Endothelial cell of umbilical vein (primary cell): ENCODE measurements at regions of chr2 and their contacts with region 1.

Region 1: DNA sequence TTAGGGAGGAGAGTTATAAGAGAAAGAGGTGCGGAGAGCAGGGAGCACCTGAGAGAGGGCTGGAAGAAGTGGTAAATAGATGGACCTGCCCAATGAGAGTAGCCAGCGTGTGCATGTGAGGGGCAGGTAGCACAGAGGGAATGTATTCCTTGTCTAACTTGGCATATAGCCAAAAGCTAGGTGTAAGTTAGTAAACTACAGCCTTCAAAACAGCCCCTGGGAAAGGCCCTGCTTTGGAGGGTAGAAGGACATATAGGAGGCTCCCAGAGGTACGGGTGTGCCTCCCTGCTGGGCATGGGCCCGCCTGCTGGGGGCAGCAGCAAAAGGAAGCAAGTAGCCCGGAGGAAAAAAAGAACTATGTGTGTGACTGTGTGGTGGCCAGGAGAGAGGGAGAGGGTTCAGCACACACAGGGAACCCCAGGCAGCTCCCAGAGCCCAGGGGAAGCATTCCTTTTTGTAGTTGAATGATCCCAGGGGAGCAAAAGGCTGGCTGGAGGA is 48.0 kb downstream of the TCF7L1 start:
- DNase-seq: no peak
- H3K4me3 ChIP-seq: no peak overlapping the region
- H3K27ac ChIP-seq: no peak overlapping the region
- H3K4me1 ChIP-seq: peaks cover 42% of the 10 kb centered on the region
- H3K27me3 ChIP-seq: no peaks in the 10 kb centered on the region
- CTCF ChIP-seq: no peak
- POLR2A ChIP-seq: no peak

Region 2: DNA sequence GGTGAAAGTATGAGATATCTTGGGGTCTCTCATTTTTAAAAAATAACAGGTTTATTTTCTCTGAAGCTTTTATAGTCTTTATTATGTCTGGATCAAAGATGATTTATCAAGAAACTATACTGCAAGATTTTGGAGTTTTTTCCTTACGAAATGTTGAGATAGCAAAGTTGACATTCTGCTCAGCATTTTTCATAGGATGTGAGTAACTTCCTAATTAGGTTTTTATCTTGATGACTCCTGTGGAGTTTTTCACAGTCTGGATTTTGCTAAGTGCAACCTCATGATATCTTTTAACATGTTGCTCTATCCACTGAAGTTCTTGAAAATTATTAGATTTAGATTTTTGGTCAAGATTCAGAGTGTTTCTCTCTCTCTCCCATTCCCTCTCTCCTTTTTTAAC is 30.2 kb before region 1 on chr2:
- CTCF ChIA-PET with region 1: interaction called, 12 read pairs
- POLR2A ChIA-PET with region 1: no interaction called
- dilution Hi-C with region 1: no loop called
- intact Hi-C with region 1: loop called (anchors 2 kb)
- DNase-seq: peak; percentile 67
- H3K4me3 ChIP-seq: no peak overlapping the region
- H3K27ac ChIP-seq: peak overlapping the region; percentile 37
- H3K4me1 ChIP-seq: peaks cover 24% of the 10 kb centered on the region
- H3K27me3 ChIP-seq: no peaks in the 10 kb centered on the region
- CTCF ChIP-seq: no peak
- POLR2A ChIP-seq: no peak

Region 3: DNA sequence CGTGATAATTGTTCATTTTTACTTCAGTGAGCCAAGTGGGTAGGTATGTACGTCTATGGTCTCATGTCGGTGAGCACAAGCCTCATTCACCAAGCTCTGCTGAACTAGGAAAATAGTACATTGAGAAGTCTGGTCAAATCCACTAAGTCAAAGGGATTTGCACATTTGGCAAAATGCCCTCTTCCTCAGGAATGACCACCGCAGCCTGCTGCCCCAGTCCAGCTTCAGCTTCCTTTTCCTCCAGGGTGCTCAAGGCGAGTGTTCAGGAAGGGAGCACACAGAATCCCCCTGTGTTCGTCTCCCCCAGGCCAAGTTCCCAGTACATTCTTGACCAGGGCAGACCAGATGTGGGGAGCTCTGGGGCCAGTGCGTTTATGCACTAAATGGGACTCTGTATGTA is 25.0 kb before region 1 on chr2:
- CTCF ChIA-PET with region 1: interaction called, 12 read pairs
- POLR2A ChIA-PET with region 1: no interaction called
- dilution Hi-C with region 1: no loop called
- intact Hi-C with region 1: loop called (anchors 2 kb)
- DNase-seq: peak; percentile 52
- H3K4me3 ChIP-seq: no peak overlapping the region
- H3K27ac ChIP-seq: no peak overlapping the region
- H3K4me1 ChIP-seq: peaks cover 27% of the 10 kb centered on the region
- H3K27me3 ChIP-seq: no peaks in the 10 kb centered on the region
- CTCF ChIP-seq: no peak
- POLR2A ChIP-seq: no peak

Region 4: DNA sequence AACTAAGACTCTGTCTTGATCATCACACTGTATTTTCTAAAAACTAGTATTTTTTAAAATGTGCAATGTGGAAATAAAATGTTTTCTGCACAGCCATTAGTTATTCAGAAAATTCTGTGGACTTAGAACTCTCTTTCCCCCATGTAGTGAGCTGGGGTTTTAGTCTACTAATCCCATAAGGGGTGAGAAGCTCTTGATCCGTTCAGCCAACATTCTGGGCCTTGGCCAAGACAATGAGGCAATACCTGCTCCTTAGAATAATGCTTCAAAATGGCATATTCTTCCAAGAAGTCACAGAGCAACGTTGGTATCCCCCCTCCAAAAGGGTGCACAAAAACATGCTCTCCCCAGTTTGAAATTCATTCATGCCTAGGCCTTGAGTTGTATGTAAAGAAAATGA is 1152.2 kb after region 1 on chr2:
- CTCF ChIA-PET with region 1: no interaction called
- POLR2A ChIA-PET with region 1: no interaction called
- dilution Hi-C with region 1: no loop called
- intact Hi-C with region 1: no loop called
- DNase-seq: no peak
- H3K4me3 ChIP-seq: no peak overlapping the region
- H3K27ac ChIP-seq: no peak overlapping the region
- H3K4me1 ChIP-seq: peaks cover 2% of the 10 kb centered on the region
- H3K27me3 ChIP-seq: peaks cover 29 to 33% of the 10 kb centered on the region in 2 experiments
- CTCF ChIP-seq: no peak
- POLR2A ChIP-seq: no peak